HCT116 (cell line): ENCODE measurements at regions of chr18 and their contacts with region 1.

Region 1: DNA sequence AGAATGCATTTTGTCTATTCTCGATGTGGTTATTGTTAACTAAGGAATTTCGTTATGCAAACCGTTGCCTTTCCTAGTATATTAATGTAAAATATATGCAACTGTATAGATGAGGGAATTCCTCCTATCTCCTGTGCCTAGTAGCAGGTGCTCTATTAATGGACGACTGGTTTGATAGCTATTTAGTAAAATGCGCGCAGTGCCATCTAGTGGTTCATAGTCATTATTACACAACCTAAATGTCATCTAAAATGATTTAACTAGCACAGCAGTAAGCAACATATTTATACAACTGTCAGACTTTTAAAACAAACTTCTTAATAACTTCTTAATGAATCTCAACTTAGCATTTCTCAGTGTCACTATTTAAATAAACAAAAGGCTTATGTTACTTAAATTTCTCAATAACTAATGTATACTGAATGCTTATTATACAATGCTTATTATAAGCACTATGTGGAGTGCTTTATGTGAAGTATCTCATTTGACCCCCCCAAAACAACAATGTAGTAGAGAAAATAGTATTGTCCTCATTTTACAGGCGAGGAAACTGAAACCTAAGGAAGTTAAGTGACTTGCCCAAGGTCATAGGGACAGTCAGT is 77.9 kb downstream of the DTNA start:
- DNase-seq: peak; percentile 59
- ATAC-seq: peak; percentile 87
- H3K4me3 ChIP-seq: no peak overlapping the region
- H3K27ac ChIP-seq: no peak overlapping the region
- H3K4me1 ChIP-seq: no peaks in the 10 kb centered on the region
- H3K27me3 ChIP-seq: no peaks in the 10 kb centered on the region
- CTCF ChIP-seq: peak; percentile 42 to 79 (median 64); a peak in 5 of 6 replicates
- POLR2A ChIP-seq: no peak
- RAD21 ChIP-seq: peak; percentile 79

Region 2: GRCh38 chr18:33231474-33232317 is 1556.3 kb before region 1 on chr18:
- CTCF ChIA-PET with region 1: no interaction called
- POLR2A ChIA-PET with region 1: no interaction called
- RAD21 ChIA-PET with region 1: no interaction called
- intact Hi-C with region 1: loop called (anchors 5 kb)
- DNase-seq: peak; percentile 19
- ATAC-seq: peak; percentile 66; the same call in 1 of the 2 replicates
- H3K4me3 ChIP-seq: no peak overlapping the region
- H3K27ac ChIP-seq: no peak overlapping the region
- H3K4me1 ChIP-seq: no peaks in the 10 kb centered on the region
- H3K27me3 ChIP-seq: no peaks in the 10 kb centered on the region
- CTCF ChIP-seq: peak; percentile 26 to 79 (median 79); a peak in 5 of 6 replicates
- POLR2A ChIP-seq: no peak
- RAD21 ChIP-seq: peak; percentile 48

Region 3: DNA sequence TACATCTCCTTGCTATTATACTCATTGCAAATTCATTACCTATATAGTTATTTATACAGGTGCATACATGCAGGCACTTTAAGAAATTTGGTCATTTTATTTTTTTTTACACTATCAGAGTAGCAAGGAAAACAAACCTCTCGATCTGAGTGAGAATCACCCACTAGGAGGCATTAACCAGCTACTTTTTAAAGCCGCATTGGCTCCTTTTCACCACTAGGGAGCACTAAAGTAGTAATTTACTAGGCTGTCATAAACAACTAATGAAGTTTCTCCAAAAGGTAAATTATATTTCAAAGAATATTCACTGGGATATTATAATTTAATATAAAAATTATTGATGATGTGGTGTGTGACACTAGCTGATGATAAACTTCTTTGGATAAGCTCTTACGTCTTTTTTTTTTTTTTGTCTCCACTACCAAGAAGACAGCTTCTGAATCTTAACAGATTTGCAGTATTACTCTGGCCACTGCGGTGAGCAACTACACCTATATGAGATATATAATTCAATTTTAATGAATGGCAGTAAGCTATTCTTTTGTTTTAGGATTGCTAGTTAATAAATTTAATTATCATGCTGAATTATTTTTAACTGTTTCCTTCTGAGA is 665.2 kb before region 1 on chr18:
- CTCF ChIA-PET with region 1: interaction called, 11 read pairs
- POLR2A ChIA-PET with region 1: no interaction called
- RAD21 ChIA-PET with region 1: interaction called in 1 of 2 experiments, 3 read pairs
- intact Hi-C with region 1: loop called (anchors 2 kb)
- DNase-seq: peak; percentile 16
- ATAC-seq: peak; percentile 44; the same call in 1 of the 2 replicates
- H3K4me3 ChIP-seq: no peak overlapping the region
- H3K27ac ChIP-seq: no peak overlapping the region
- H3K4me1 ChIP-seq: no peaks in the 10 kb centered on the region
- H3K27me3 ChIP-seq: no peaks in the 10 kb centered on the region
- CTCF ChIP-seq: peak; percentile 73 to 97 (median 76)
- POLR2A ChIP-seq: no peak
- RAD21 ChIP-seq: peak; percentile 56

Region 4: DNA sequence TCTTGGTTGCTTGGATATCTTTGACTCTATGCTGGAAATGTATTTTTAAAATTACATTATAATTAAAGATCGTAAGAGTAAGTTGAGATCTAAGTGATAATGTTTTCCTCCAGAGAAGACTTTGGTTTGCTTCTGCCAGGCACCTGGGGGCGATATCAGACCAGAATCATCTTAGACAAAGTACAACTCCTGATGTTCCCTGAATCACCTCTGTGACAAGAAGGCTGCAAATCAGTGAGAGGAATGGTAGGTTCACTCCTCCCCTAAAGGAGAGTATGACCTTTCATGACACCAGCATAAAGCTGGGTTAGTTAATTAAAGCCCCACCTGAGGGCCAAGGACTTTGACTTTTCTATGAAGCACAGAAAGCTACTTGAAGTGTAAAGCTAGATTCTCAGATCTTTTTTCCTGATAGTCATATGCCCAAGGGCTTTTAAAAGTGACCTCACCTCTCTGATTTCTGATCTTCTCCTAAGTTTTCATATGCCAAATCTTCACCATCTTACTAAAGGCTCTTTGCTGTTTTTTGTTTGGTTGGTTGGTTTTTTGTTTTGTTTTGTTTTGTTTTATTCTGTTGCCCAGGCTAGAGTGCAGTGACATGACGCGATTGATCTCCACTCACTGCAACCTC is 192.2 kb before region 1 on chr18:
- CTCF ChIA-PET with region 1: interaction called, 16 read pairs
- POLR2A ChIA-PET with region 1: no interaction called
- RAD21 ChIA-PET with region 1: interaction called in 1 of 2 experiments, 3 read pairs
- intact Hi-C with region 1: loop called (anchors 1 kb)
- DNase-seq: peak; percentile 28
- ATAC-seq: peak; percentile 70
- H3K4me3 ChIP-seq: no peak overlapping the region
- H3K27ac ChIP-seq: no peak overlapping the region
- H3K4me1 ChIP-seq: no peaks in the 10 kb centered on the region
- H3K27me3 ChIP-seq: 0 out of 2 replicates have a peak, but pooled peaks cover 3% of the 10 kb centered on the region
- CTCF ChIP-seq: peak; percentile 41 to 42 (median 41); a peak in 4 of 6 replicates
- POLR2A ChIP-seq: no peak
- RAD21 ChIP-seq: peak; percentile 65